ENCODE measurements at regions of chr17 and their contacts with region 1.

Region 1: DNA sequence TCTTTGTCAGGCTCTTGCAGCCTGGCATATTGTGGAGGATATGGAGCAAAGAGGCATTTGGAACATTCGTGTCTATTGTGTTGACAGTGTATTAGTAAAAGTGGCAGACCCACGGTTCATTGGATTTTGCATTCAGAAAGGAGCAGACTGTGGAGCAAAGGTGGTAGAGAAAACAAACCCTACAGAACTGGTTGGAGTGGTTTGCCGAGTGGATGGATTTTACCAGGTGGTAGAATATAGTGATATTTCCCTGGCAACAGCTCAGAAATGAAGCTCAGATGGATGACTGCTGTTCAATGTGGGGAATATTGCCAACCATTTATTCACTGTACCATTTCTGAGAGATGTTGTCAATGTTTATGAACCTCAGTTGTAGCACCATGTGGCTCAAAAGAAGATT is 44.5 kb downstream of the EFCAB13 start:
- DNase-seq: no peak
- H3K4me3 ChIP-seq: no peak overlapping the region
- H3K27ac ChIP-seq: no peak overlapping the region
- H3K4me1 ChIP-seq: no peaks in the 10 kb centered on the region
- H3K27me3 ChIP-seq: no peaks in the 10 kb centered on the region
- CTCF ChIP-seq: no peak

Region 2: GRCh38 chr17:47286198-47286914 is 81.9 kb before region 1 on chr17:
- intact Hi-C with region 1: no loop called
- DNase-seq: no peak
- H3K4me3 ChIP-seq: no peak overlapping the region
- H3K27ac ChIP-seq: no peak overlapping the region
- H3K4me1 ChIP-seq: no peaks in the 10 kb centered on the region
- H3K27me3 ChIP-seq: no peaks in the 10 kb centered on the region
- CTCF ChIP-seq: no peak

Region 3: GRCh38 chr17:47604598-47604927 is 236.3 kb after region 1 on chr17:
- intact Hi-C with region 1: no loop called
- DNase-seq: no peak
- H3K4me3 ChIP-seq: no peak overlapping the region
- H3K27ac ChIP-seq: no peak overlapping the region
- H3K4me1 ChIP-seq: no peaks in the 10 kb centered on the region
- H3K27me3 ChIP-seq: no peaks in the 10 kb centered on the region
- CTCF ChIP-seq: no peak

Region 4: DNA sequence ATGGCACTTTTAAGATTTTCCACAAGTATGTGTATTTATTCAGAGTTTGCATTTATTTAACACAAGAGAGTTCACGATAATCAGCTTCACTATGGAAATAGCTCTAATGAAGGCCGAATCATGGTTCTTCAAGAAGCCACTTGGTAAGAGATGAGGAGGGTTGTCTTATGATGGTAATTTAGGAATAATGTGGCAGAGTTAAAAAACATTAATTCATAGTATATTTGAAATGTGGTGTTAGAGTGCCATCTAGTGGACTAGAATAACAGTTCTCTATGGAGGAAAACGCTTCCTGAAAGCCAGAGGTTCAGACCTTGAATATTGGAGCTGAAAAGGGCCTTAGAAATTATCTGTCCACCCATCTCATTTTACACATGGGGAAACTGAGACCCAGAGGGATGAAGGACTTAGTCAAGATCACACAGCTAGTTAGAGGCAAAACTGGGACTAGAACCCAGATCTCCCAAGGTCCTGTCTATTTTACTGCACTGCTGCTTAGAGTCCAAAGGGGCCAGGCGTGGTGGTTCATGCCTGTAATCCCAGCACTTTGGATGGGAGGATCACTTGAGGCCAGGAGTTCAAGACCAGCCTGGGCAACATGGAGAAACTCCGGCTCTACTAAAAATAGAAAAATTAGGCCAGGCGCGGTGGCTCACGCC is 247.6 kb after region 1 on chr17:
- intact Hi-C with region 1: loop called (anchors 10 kb)
- DNase-seq: no peak
- H3K4me3 ChIP-seq: no peak overlapping the region
- H3K27ac ChIP-seq: no peak overlapping the region
- H3K4me1 ChIP-seq: no peaks in the 10 kb centered on the region
- H3K27me3 ChIP-seq: no peaks in the 10 kb centered on the region
- CTCF ChIP-seq: peak; percentile 58

Measured in colonic mucosa (tissue), 4 donors.